Tibial artery (tissue), 4 donors: ENCODE measurements at regions of chr3 and their contacts with region 1.

Region 1: DNA sequence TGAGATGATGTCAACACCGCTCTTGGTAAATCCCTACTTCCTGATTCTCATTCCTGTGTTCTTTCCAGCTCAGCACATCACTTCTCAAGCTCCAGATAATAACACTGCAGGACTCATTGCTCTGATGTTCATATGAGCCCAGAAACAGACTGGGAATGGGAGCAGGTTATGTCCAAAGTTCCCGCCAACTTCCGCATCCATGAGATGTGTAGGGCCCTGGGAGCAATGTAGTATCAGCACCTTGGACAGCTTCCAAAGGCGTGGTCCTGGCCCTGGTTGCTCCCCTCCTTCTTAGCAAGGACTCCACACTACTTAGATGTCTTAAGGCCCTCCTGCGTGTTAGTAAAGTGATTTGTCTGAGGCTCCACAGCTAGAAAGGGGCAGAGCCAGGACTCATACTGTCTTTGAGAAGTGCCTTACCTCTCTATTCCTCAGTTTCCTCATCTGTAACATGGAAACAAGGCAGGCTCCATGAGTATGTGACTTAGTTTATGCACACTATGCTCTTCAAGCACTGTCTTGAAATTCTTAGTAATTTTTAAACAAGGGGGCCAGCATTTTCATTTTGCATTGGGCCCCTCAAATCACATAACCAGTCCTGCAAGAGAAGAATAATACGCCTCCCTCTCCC is 27.9 kb upstream of the SLC6A1 start:
- DNase-seq: no peak
- H3K4me3 ChIP-seq: no peak overlapping the region
- H3K27ac ChIP-seq: no peak overlapping the region
- H3K4me1 ChIP-seq: no peaks in the 10 kb centered on the region
- H3K27me3 ChIP-seq: peaks cover 0 to 10% of the 10 kb centered on the region in 2 donors
- CTCF ChIP-seq: no peak

Region 2: GRCh38 chr3:10299679-10300078 is 665.0 kb before region 1 on chr3:
- intact Hi-C with region 1: no loop called
- DNase-seq: no peak
- H3K4me3 ChIP-seq: no peak overlapping the region
- H3K27ac ChIP-seq: no peak overlapping the region
- H3K4me1 ChIP-seq: no peaks in the 10 kb centered on the region
- H3K27me3 ChIP-seq: no peaks in the 10 kb centered on the region
- CTCF ChIP-seq: no peak

Region 3: DNA sequence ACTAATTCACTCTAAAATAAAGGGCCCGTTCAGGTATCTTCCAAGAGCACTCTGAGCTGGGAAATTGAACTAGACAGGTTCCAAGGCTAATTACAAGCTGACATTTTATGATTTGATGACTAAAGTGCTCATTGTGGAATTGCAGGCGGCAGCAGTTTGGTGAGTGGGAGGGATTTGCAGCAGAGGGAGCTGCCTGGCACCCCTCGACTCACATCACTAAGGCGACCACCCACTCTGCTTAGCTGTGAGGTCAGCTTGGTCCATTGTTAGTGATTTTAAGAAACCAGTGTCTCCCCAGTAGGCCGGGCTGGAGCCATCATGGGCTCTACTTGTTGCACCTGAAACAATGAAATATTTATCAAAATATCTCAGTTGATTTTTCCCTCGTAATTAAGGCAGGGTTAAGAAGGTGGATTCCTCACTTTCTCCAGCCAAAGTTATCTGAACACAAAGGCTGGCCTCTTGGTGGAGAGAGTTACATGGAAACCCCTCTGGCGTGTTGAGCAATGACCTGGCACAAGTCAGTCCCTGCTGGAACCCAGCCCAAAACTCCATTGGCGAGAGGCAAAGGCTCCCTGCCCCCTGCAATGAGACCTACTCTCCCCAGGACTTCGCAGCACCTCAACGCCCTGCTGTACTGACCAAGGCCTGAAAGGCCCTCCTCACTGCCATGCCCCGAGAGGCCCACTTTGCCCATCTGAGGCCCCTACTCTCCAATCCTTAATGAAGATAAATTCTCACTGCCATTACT is 394.3 kb before region 1 on chr3:
- intact Hi-C with region 1: no loop called
- DNase-seq: no peak
- H3K4me3 ChIP-seq: no peak overlapping the region
- H3K27ac ChIP-seq: no peak overlapping the region
- H3K4me1 ChIP-seq: no peaks in the 10 kb centered on the region
- H3K27me3 ChIP-seq: peaks cover 0 to 8% of the 10 kb centered on the region in 2 donors
- CTCF ChIP-seq: no peak

Region 4: GRCh38 chr3:11335056-11335608 is 370.5 kb after region 1 on chr3:
- intact Hi-C with region 1: loop called (anchors 10 kb)
- DNase-seq: no peak
- H3K4me3 ChIP-seq: no peak overlapping the region
- H3K27ac ChIP-seq: no peak overlapping the region
- H3K4me1 ChIP-seq: no peaks in the 10 kb centered on the region
- H3K27me3 ChIP-seq: no peaks in the 10 kb centered on the region
- CTCF ChIP-seq: peak; percentile 72 to 86